ENCODE measurements at regions of chr4 and their contacts with region 1.

Region 1: DNA sequence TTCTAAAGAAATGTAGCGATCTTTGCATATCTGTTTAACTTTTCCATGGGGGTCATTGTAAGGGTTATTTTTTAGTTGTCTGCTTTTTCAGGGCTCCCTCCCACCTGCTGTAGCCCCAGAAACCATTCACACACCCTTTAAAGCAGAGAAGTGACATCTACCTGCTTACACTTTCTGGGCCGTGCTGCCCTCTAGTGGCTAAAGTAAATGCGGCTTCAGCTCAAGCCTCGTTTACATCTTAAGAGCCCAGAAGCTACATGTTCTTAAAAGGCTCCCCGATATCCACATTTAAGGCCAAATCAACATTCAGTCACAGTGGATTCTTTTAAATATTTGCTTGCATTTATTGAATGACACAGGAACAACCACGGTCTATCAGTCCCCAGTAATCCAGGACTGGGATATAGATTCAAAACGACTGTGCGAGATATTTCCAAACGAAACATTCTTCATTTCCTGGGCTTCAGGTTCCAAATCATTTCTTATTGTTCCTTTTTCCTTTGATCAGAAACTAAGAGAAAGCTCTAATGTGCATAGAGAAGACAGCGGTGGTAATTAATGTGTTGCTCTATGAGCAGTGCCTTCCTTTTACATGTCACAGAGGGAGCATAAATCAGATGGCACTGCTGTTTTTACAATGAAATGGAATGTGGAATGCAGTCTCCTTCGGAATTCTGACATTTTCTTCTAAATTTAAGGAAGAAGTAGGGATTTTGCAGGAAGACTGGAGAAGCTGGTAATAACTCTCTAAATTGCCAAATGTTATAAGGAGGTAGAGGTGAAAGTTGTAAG is 119.9 kb downstream of the RASGEF1B start:
- DNase-seq: peak; percentile 39
- H3K4me3 ChIP-seq: no peak overlapping the region
- H3K27ac ChIP-seq: no peak overlapping the region
- H3K4me1 ChIP-seq: no peaks in the 10 kb centered on the region
- H3K27me3 ChIP-seq: no peaks in the 10 kb centered on the region
- CTCF ChIP-seq: peak; percentile 90 to 96

Region 2: GRCh38 chr4:81069706-81070331 is 282.0 kb before region 1 on chr4:
- CTCF ChIA-PET with region 1: interaction called, 9 read pairs
- dilution Hi-C with region 1: no loop called
- in situ Hi-C with region 1: loop called in 1 of 2 experiments (anchors 10 kb)
- intact Hi-C with region 1: loop called (anchors 1 kb)
- DNase-seq: peak; percentile 73
- H3K4me3 ChIP-seq: no peak overlapping the region
- H3K27ac ChIP-seq: no peak overlapping the region
- H3K4me1 ChIP-seq: no peaks in the 10 kb centered on the region
- H3K27me3 ChIP-seq: no peaks in the 10 kb centered on the region
- CTCF ChIP-seq: peak; percentile 94 to 95

Region 3: GRCh38 chr4:81084029-81084428 is 267.8 kb before region 1 on chr4:
- CTCF ChIA-PET with region 1: interaction called, 7 read pairs
- dilution Hi-C with region 1: no loop called
- in situ Hi-C with region 1: loop called in 1 of 2 experiments (anchors 5 kb)
- intact Hi-C with region 1: loop called (anchors 1 kb)
- DNase-seq: peak; percentile 68
- H3K4me3 ChIP-seq: no peak overlapping the region
- H3K27ac ChIP-seq: no peak overlapping the region
- H3K4me1 ChIP-seq: no peaks in the 10 kb centered on the region
- H3K27me3 ChIP-seq: no peaks in the 10 kb centered on the region
- CTCF ChIP-seq: peak; percentile 70 to 99

Region 4: GRCh38 chr4:81214881-81215868 is 136.7 kb before region 1 on chr4 and contains the start of gene PRKG2:
- CTCF ChIA-PET with region 1: no interaction called
- dilution Hi-C with region 1: no loop called
- in situ Hi-C with region 1: no loop called
- intact Hi-C with region 1: loop called (anchors 1 kb)
- DNase-seq: peak; percentile 39
- H3K4me3 ChIP-seq: peak within 1 kb of the TSS; percentile 39 to 50 (median 46)
- H3K27ac ChIP-seq: no peak within 1 kb of the TSS
- H3K4me1 ChIP-seq: peaks cover 12% of the 10 kb centered on the region
- H3K27me3 ChIP-seq: peaks cover 11% of the 10 kb centered on the region
- CTCF ChIP-seq: no peak
- total RNA-seq, gene PRKG2: 2.1 to 11.0 TPM

Region 5: DNA sequence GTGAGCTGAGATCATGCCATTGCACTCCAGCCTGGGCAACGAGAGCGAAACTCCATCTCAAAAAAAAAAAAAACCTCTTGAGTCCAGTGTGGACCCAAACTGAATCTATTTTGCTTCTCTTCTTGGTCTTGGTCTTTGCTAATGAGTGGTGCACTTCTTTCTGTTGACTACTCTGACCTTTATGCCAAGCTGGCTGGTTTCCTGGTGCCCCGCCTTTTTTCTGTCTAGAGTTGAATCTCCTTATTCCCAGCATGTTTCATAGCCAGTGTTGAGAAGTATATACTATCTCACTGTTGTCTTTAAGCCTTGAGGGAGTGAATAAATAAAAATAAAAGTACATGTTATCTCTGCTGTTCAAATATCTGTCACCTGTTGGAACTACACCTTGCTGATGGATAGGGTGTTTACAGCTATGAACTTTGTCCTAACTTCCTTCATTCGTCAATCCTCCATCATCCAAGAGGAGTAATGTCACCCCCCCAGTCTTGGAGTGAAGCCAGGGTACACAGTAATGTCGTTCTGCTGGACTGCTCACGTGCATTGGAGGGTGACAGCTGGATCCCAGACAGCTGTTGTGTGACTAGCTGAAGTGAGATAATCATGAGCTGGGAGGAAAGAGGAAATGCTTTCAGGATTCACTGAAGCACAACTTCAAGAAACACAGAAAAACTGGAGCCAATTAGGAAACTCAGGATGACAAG is 37.5 kb before region 1 on chr4:
- CTCF ChIA-PET with region 1: no interaction called
- dilution Hi-C with region 1: no loop called
- in situ Hi-C with region 1: no loop called
- intact Hi-C with region 1: no loop called
- DNase-seq: peak; percentile 2
- H3K4me3 ChIP-seq: no peak overlapping the region
- H3K27ac ChIP-seq: no peak overlapping the region
- H3K4me1 ChIP-seq: no peaks in the 10 kb centered on the region
- H3K27me3 ChIP-seq: peaks cover 4% of the 10 kb centered on the region
- CTCF ChIP-seq: no peak

Region 6: DNA sequence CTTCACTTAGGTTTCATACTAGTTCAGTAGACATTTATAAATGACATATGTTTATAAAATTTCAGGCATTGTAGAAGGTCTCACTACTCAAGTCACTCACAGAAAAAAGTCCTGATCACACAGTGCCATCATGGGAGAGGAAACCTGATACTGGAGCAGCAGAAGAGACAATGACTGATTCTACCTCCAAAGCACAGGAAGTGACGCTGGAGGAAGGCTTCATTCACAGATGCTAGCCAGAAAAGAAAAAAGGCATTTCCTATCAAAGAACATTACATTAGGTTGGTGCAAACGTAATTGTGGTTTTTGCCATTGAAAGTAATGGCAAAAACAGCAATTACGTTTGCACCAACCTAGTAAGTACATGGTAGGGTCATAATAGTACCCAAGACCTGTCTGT is 40.3 kb after region 1 on chr4:
- CTCF ChIA-PET with region 1: no interaction called
- dilution Hi-C with region 1: no loop called
- in situ Hi-C with region 1: no loop called
- intact Hi-C with region 1: no loop called
- DNase-seq: no peak
- H3K4me3 ChIP-seq: no peak overlapping the region
- H3K27ac ChIP-seq: no peak overlapping the region
- H3K4me1 ChIP-seq: no peaks in the 10 kb centered on the region
- H3K27me3 ChIP-seq: no peaks in the 10 kb centered on the region
- CTCF ChIP-seq: no peak